Endothelial cell of umbilical vein (primary cell): ENCODE measurements at regions of chr14 and their contacts with region 1.

Region 1: DNA sequence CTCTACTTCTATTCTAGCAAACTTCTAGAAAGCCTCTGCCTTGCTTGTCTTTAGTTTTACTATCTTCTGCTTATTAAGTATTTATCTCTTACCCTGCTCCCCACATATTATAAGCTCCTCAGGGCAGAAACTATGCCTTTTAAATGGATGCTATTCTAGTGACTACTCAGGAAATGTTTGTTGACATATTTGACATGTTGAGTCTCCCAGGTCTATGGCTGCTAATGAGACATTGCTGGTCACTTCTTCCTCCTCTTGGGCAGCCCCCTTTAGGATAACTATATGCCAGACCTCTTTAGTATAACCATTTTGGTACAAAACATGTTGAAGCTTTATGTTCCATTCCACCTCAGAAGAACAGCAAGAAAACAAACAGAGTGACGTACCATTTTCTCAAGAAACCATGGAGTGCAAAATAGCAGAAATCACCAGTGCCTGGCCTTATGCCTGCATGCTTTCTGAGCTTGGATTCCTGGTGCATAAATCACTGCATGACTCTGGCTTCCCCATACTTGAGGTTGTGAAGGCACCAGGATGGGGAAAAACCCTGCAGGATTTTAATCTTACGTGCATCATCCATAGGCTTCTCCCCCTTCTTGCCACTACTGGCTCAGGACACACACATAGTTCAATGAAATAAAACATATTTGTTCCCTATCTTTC is 202.6 kb downstream of the TMX1 start:
- DNase-seq: peak; percentile 86
- H3K4me3 ChIP-seq: no peak overlapping the region
- H3K27ac ChIP-seq: peak overlapping the region; percentile 92
- H3K4me1 ChIP-seq: peaks cover 37% of the 10 kb centered on the region
- H3K27me3 ChIP-seq: no peaks in the 10 kb centered on the region
- CTCF ChIP-seq: no peak
- POLR2A ChIP-seq: no peak

Region 2: GRCh38 chr14:51547260-51547659 is 104.6 kb after region 1 on chr14:
- CTCF ChIA-PET with region 1: interaction called, 4 read pairs
- POLR2A ChIA-PET with region 1: no interaction called
- dilution Hi-C with region 1: no loop called
- intact Hi-C with region 1: loop called (anchors 2 kb)
- DNase-seq: peak; percentile 99
- H3K4me3 ChIP-seq: no peak overlapping the region
- H3K27ac ChIP-seq: peak overlapping the region; percentile 96
- H3K4me1 ChIP-seq: peaks cover 32% of the 10 kb centered on the region
- H3K27me3 ChIP-seq: no peaks in the 10 kb centered on the region
- CTCF ChIP-seq: no peak
- POLR2A ChIP-seq: peak; percentile 80